ENCODE measurements at regions of chr4 and their contacts with region 1.

Region 1: GRCh38 chr4:90293320-90293719 is 166.1 kb downstream of the CCSER1 start:
- DNase-seq: peak; percentile 13
- ATAC-seq: no peak
- H3K4me3 ChIP-seq: no peak overlapping the region
- H3K4me3 Mint-ChIP-seq: no peak overlapping the region
- H3K27ac ChIP-seq: no peak overlapping the region
- H3K27ac Mint-ChIP-seq: no peak overlapping the region
- H3K4me1 ChIP-seq: no peaks in the 10 kb centered on the region
- H3K4me1 Mint-ChIP-seq: no peaks in the 10 kb centered on the region
- H3K27me3 ChIP-seq: no peaks in the 10 kb centered on the region
- H3K27me3 Mint-ChIP-seq: no peaks in the 10 kb centered on the region
- CTCF ChIP-seq: peak; percentile 88

Region 2: DNA sequence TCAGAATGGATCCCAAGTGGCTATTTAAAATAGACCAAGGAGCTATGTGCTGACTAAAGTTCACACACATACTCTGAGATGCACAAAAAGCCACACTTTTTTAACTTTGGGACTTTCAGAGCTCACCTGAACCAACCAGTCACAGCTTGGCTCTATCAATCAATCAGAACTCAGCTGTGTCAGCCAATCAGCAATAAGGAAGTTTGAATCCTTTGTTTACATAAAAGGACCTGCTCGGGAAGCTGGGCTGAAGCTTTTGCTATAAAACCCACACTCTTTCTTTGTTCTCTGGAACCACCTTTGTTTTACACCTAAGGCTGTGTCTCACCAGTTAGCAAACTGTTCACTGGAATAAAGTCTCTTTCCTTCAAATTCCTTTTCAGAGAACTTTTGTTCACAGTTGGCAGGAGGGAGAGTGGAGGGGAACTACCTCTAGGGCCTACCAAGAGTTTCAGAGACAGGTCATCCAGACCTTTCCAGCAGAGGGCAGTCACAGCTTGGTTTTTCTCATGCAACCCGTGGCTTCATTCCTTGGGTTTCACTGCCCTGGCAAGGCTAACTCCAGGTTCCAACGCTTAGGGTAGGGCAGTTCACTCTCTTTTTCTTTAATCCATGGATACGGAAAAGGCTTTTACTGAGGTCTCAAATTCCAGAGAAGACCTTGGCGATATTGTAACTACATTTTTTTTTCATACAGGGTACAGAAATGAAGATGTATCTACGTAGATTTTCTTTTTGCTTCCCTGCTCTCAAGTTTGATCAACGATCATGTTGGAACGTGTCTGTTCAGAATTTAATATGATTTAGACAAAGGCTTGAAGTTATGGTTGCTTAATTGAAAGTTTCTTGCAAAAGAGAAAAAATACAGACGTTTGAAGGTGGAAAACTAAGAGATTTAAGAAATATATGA is 1066.4 kb before region 1 on chr4:
- CTCF ChIA-PET with region 1: interaction called, 5 read pairs
- POLR2A ChIA-PET with region 1: no interaction called
- intact Hi-C with region 1: loop called (anchors 2 kb)
- DNase-seq: peak; percentile 73
- ATAC-seq: peak; percentile 69
- H3K4me3 ChIP-seq: no peak overlapping the region
- H3K4me3 Mint-ChIP-seq: no peak overlapping the region
- H3K27ac ChIP-seq: no peak overlapping the region
- H3K27ac Mint-ChIP-seq: no peak overlapping the region
- H3K4me1 ChIP-seq: peaks cover 0 to 4% of the 10 kb centered on the region in 2 donors
- H3K4me1 Mint-ChIP-seq: peaks cover 2% of the 10 kb centered on the region
- H3K27me3 ChIP-seq: no peaks in the 10 kb centered on the region
- H3K27me3 Mint-ChIP-seq: no peaks in the 10 kb centered on the region
- CTCF ChIP-seq: peak; percentile 83

Region 3: GRCh38 chr4:89434364-89434988 is 858.8 kb before region 1 on chr4:
- CTCF ChIA-PET with region 1: no interaction called
- POLR2A ChIA-PET with region 1: no interaction called
- intact Hi-C with region 1: loop called (anchors 2 kb)
- DNase-seq: peak; percentile 52
- ATAC-seq: peak; percentile 41
- H3K4me3 ChIP-seq: no peak overlapping the region
- H3K4me3 Mint-ChIP-seq: no peak overlapping the region
- H3K27ac ChIP-seq: no peak overlapping the region
- H3K27ac Mint-ChIP-seq: no peak overlapping the region
- H3K4me1 ChIP-seq: peaks cover 0 to 4% of the 10 kb centered on the region in 2 donors
- H3K4me1 Mint-ChIP-seq: peaks cover 7% of the 10 kb centered on the region
- H3K27me3 ChIP-seq: no peaks in the 10 kb centered on the region
- H3K27me3 Mint-ChIP-seq: peaks cover 9% of the 10 kb centered on the region
- CTCF ChIP-seq: peak; percentile 71

Region 4: GRCh38 chr4:89949782-89950387 is 343.4 kb before region 1 on chr4:
- CTCF ChIA-PET with region 1: interaction called, 4 read pairs
- POLR2A ChIA-PET with region 1: no interaction called
- intact Hi-C with region 1: loop called (anchors 1 kb)
- DNase-seq: peak; percentile 13
- ATAC-seq: no peak
- H3K4me3 ChIP-seq: no peak overlapping the region
- H3K4me3 Mint-ChIP-seq: no peak overlapping the region
- H3K27ac ChIP-seq: no peak overlapping the region
- H3K27ac Mint-ChIP-seq: no peak overlapping the region
- H3K4me1 ChIP-seq: no peaks in the 10 kb centered on the region
- H3K4me1 Mint-ChIP-seq: no peaks in the 10 kb centered on the region
- H3K27me3 ChIP-seq: no peaks in the 10 kb centered on the region
- H3K27me3 Mint-ChIP-seq: peaks cover 4% of the 10 kb centered on the region
- CTCF ChIP-seq: peak; percentile 67

Region 5: DNA sequence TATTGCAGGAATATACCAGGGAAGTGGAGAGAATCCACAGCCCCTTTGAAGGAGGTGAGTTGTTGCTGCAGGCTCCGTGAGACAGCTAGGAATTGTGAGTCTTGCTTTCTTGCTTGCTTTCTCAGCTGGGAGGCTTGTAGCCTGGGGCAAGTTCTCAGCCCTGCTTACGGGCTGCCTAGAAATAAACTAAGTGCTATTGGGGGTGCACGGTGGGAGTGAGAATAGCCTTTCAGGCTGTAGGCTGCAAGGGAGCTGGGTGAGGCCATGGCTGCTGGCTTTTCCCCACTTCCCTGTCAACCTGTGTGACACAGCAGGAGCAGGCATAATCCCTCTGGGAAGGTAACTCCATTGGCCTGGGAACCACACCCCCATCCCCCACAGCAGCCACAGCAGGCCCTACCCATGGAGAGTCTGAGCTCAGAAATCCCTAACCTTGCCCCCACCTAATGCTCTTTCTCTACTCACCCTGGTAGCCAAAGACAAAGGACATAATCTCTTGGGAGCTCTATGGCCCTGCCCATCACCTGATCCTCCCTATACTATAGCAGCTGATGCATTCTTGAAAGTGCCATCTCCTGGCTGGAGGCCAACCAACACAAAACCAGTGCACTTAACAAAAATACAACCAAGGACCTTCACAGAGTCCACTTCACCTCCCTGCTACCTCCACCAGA is 285.7 kb before region 1 on chr4:
- CTCF ChIA-PET with region 1: no interaction called
- POLR2A ChIA-PET with region 1: no interaction called
- intact Hi-C with region 1: loop called (anchors 5 kb)
- DNase-seq: no peak
- ATAC-seq: no peak
- H3K4me3 ChIP-seq: no peak overlapping the region
- H3K4me3 Mint-ChIP-seq: no peak overlapping the region
- H3K27ac ChIP-seq: no peak overlapping the region
- H3K27ac Mint-ChIP-seq: no peak overlapping the region
- H3K4me1 ChIP-seq: no peaks in the 10 kb centered on the region
- H3K4me1 Mint-ChIP-seq: peaks cover 3% of the 10 kb centered on the region
- H3K27me3 ChIP-seq: peaks cover 0 to 3% (median 0%) of the 10 kb centered on the region in 4 experiments
- H3K27me3 Mint-ChIP-seq: no peaks in the 10 kb centered on the region
- CTCF ChIP-seq: no peak

Region 6: GRCh38 chr4:90025248-90025647 is 268.1 kb before region 1 on chr4:
- CTCF ChIA-PET with region 1: interaction called, 24 read pairs
- POLR2A ChIA-PET with region 1: no interaction called
- intact Hi-C with region 1: loop called (anchors 1 kb)
- DNase-seq: peak; percentile 28
- ATAC-seq: no peak
- H3K4me3 ChIP-seq: no peak overlapping the region
- H3K4me3 Mint-ChIP-seq: no peak overlapping the region
- H3K27ac ChIP-seq: no peak overlapping the region
- H3K27ac Mint-ChIP-seq: no peak overlapping the region
- H3K4me1 ChIP-seq: peaks cover 19 to 33% of the 10 kb centered on the region in 2 donors
- H3K4me1 Mint-ChIP-seq: peaks cover 30% of the 10 kb centered on the region
- H3K27me3 ChIP-seq: no peaks in the 10 kb centered on the region
- H3K27me3 Mint-ChIP-seq: no peaks in the 10 kb centered on the region
- CTCF ChIP-seq: peak; percentile 52

Region 7: GRCh38 chr4:90120037-90120436 is 173.3 kb before region 1 on chr4:
- CTCF ChIA-PET with region 1: interaction called, 7 read pairs
- POLR2A ChIA-PET with region 1: no interaction called
- intact Hi-C with region 1: loop called (anchors 1 kb)
- DNase-seq: peak; percentile 36
- ATAC-seq: no peak
- H3K4me3 ChIP-seq: no peak overlapping the region
- H3K4me3 Mint-ChIP-seq: no peak overlapping the region
- H3K27ac ChIP-seq: no peak overlapping the region
- H3K27ac Mint-ChIP-seq: no peak overlapping the region
- H3K4me1 ChIP-seq: peaks cover 0 to 3% of the 10 kb centered on the region in 2 donors
- H3K4me1 Mint-ChIP-seq: peaks cover 8% of the 10 kb centered on the region
- H3K27me3 ChIP-seq: no peaks in the 10 kb centered on the region
- H3K27me3 Mint-ChIP-seq: no peaks in the 10 kb centered on the region
- CTCF ChIP-seq: no peak

Region 8: GRCh38 chr4:90328558-90328957 is 35.2 kb after region 1 on chr4:
- CTCF ChIA-PET with region 1: no interaction called
- POLR2A ChIA-PET with region 1: no interaction called
- intact Hi-C with region 1: no loop called
- DNase-seq: no peak
- ATAC-seq: no peak
- H3K4me3 ChIP-seq: no peak overlapping the region
- H3K4me3 Mint-ChIP-seq: no peak overlapping the region
- H3K27ac ChIP-seq: no peak overlapping the region
- H3K27ac Mint-ChIP-seq: no peak overlapping the region
- H3K4me1 ChIP-seq: no peaks in the 10 kb centered on the region
- H3K4me1 Mint-ChIP-seq: no peaks in the 10 kb centered on the region
- H3K27me3 ChIP-seq: no peaks in the 10 kb centered on the region
- H3K27me3 Mint-ChIP-seq: no peaks in the 10 kb centered on the region
- CTCF ChIP-seq: no peak